Heart right ventricle (tissue), 16 donors: ENCODE measurements at regions of chr9 and their contacts with region 1.

Region 1: DNA sequence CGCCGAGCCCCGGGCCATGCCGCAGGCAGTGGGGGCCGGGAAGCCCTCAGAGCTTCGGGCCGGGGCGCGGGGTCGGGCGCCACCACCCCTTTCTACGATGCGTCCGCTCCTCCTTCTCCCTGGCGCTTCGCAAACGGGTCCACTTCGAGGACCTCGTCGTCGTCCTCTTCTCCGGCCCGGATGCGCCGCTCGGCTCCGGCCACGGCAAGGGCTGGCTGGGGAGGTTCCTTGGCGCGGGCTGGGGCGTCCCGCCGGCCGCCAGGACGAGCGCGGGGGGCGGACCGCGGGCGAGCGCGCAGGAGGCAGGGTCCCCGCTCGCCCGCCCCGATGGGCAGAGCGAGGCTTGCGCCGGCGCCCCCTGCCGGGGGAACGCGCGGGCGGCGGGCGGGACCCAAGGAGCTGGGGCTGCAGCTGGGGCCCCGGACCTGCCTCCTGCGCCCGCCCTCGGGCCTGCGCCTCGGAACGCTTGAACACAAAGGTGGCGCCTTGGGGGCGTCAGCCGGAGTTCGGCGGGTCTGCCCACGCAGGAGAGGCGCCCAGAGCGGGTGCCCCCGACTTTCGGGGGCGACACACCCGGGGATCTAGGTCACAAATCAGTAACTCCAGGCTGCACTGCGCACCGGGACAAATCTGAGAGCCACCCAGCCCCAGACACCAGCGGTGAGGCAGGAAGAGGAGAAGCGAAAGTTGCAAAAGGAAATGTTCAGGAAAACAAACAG is at the start of gene ROR2:
- DNase-seq: peak; percentile 19 to 65
- ATAC-seq: peak; percentile 40 to 90 (median 78)
- H3K4me3 ChIP-seq: peak within 1 kb of the TSS; percentile 28 to 57 (median 49)
- H3K27ac ChIP-seq: peak within 1 kb of the TSS in 2 of 10 donors; percentile 13 to 75
- H3K4me1 ChIP-seq: peaks cover 0 to 33% (median 15%) of the 10 kb centered on the region in 9 donors
- H3K27me3 ChIP-seq: peaks cover 25 to 84% (median 71%) of the 10 kb centered on the region in 7 donors
- CTCF ChIP-seq: peak; percentile 27 to 61 (median 52)
- total RNA-seq, gene ROR2: 0.11 to 1.4 (median 0.43) TPM

Region 2: DNA sequence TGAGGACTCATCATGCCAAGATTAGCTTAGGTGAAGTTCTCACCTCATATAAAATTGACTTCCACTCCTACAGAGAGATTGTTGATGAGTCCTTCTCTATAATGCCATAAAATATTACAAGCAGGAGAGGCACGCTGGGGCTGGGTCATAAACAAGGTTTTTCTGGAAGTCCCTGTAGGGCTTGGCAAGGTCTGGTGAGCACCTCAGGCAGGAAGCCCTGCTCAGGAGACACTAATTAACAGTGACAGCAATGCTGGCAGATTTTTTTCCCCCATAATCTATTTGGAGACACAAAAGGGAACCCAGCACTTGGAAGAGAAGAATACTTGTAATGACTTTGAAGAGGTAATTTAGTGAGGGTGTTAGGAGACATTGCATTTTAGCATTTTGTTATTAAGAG is 1426.1 kb before region 1 on chr9:
- intact Hi-C with region 1: no loop called
- DNase-seq: no peak
- ATAC-seq: no peak
- H3K4me3 ChIP-seq: no peak overlapping the region
- H3K27ac ChIP-seq: no peak overlapping the region
- H3K4me1 ChIP-seq: no peaks in the 10 kb centered on the region
- H3K27me3 ChIP-seq: peaks cover 0 to 20% (median 11%) of the 10 kb centered on the region in 7 donors
- CTCF ChIP-seq: no peak

Region 3: GRCh38 chr9:91766315-91767069 is 183.6 kb before region 1 on chr9:
- intact Hi-C with region 1: loop called in 5 of 10 experiments (anchors 10 kb)
- DNase-seq: no peak
- ATAC-seq: no peak
- H3K4me3 ChIP-seq: no peak overlapping the region
- H3K27ac ChIP-seq: no peak overlapping the region
- H3K4me1 ChIP-seq: no peaks in the 10 kb centered on the region
- H3K27me3 ChIP-seq: peaks cover 0 to 26% (median 5%) of the 10 kb centered on the region in 7 donors
- CTCF ChIP-seq: no peak

Region 4: DNA sequence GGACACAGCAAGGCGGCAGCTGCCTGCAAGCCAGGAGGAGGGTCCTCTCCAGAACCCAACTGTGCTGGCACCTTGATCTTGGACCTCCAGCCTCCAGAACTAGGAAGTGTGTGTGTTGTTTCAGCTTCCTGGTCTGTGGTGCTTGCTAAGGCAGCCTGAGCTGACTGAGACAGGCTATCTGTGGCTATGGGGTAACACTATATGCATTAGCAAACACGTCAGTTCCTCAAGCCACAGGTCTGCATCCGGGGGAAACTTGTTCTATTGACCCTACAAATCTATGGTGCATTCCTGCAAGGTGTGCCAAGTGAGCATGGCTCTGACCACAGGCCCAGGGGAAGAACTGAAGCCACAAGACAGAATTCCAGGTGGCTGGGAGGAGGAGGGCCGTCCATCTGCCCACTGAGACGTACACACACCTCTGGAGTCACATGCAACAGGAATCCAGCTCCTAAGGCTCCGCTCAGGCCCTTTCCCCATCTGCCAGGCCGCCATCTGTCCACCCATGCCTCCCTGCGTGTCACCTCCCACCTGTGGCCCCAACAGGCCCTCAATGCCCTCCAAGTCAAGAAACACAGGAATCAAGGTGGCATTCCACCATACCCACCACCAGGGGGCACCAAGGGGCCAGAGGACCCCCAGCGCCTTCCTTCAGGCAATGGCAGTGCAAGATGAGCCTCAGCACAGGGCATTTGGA is 174.9 kb before region 1 on chr9:
- intact Hi-C with region 1: loop called in 9 of 10 experiments (anchors 1 to 10 kb)
- DNase-seq: peak; percentile 40 to 59
- ATAC-seq: peak; percentile 52 to 76 (median 70)
- H3K4me3 ChIP-seq: no peak overlapping the region
- H3K27ac ChIP-seq: no peak overlapping the region
- H3K4me1 ChIP-seq: peaks cover 0 to 18% (median 0%) of the 10 kb centered on the region in 9 donors
- H3K27me3 ChIP-seq: peaks cover 0 to 41% (median 10%) of the 10 kb centered on the region in 7 donors
- CTCF ChIP-seq: peak; percentile 60 to 87 (median 79)

Region 5: GRCh38 chr9:91847581-91848091 is 102.5 kb before region 1 on chr9:
- intact Hi-C with region 1: loop called in 1 of 10 experiments (anchors 10 kb)
- DNase-seq: no peak
- ATAC-seq: no peak
- H3K4me3 ChIP-seq: no peak overlapping the region
- H3K27ac ChIP-seq: no peak overlapping the region
- H3K4me1 ChIP-seq: peaks cover 0 to 14% (median 3%) of the 10 kb centered on the region in 9 donors
- H3K27me3 ChIP-seq: peaks cover 0 to 15% (median 0%) of the 10 kb centered on the region in 7 donors
- CTCF ChIP-seq: no peak

Region 6: GRCh38 chr9:91992461-91993041 is 42.4 kb after region 1 on chr9:
- intact Hi-C with region 1: no loop called
- DNase-seq: no peak
- ATAC-seq: no peak
- H3K4me3 ChIP-seq: no peak overlapping the region
- H3K27ac ChIP-seq: no peak overlapping the region
- H3K4me1 ChIP-seq: no peaks in the 10 kb centered on the region
- H3K27me3 ChIP-seq: peaks cover 0 to 59% (median 34%) of the 10 kb centered on the region in 7 donors
- CTCF ChIP-seq: no peak